Caco-2 (cell line): ENCODE measurements at regions of chr3 and their contacts with region 1.

Region 1: DNA sequence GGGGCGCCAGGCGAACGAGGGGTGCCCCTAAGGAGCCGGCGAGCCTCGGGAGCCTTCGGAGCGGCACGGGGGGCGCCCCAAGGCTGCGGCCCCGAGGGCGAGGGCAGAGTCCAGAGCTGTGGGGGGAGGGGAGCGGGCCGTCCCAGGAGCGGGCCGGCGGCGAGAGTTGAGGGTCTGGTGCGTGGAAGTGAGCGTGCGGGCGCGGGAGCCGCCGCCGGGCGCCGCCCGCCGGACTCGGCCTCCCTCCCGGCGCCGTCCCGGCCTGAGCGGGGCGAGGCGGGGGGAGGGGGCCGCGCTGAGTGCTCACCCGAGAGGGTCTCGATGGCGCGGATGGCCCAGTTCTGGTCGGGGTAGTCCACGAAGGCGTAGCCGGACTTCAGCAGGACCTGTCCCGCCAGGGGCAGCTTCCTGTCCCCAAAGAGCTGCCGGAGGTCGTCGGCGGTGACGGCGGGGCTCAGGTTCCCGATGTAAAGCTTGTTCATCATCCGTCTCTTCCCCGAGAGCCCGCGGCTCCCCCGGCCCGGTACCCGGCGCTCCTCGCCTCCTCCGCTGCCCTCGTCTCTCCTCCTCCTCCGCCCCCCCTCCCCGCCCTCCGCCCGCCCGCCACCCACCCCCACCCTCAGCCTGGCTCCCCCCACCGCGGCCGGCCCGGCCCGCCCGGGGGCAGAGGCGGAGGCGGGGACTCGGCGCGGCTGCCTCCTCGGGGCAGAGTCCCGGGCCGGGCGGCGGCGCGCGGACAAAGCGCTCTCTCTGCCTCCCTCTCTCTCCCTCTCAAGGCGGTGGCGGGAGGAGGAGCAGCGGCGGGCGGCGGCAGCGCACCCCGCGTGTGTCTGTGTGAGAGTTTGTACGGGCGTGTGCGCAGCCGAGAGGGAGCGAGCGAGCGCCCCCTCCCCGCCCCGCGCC is at the start of gene IGF2BP2:
- DNase-seq: peak; percentile 88 to 91
- H3K4me3 ChIP-seq: peak within 1 kb of the TSS; percentile 94
- H3K4me3 Mint-ChIP-seq: peak within 1 kb of the TSS; percentile 85
- H3K27ac Mint-ChIP-seq: peak within 1 kb of the TSS; percentile 98
- H3K4me1 ChIP-seq: peaks cover 23% of the 10 kb centered on the region
- H3K4me1 Mint-ChIP-seq: peaks cover 19% of the 10 kb centered on the region
- H3K27me3 ChIP-seq: no peaks in the 10 kb centered on the region
- H3K27me3 Mint-ChIP-seq: no peaks in the 10 kb centered on the region
- CTCF ChIP-seq: peak in 1 of 2 experiments; percentile 8
- total RNA-seq, gene IGF2BP2: 75.9 and 80.8 TPM in 2 replicates

Region 2: GRCh38 chr3:185789891-185790830 is 34.6 kb before region 1 on chr3:
- CTCF ChIA-PET with region 1: no interaction called
- POLR2A ChIA-PET with region 1: no interaction called
- intact Hi-C with region 1: loop called (anchors 5 kb)
- DNase-seq: no peak
- H3K4me3 ChIP-seq: no peak overlapping the region
- H3K4me3 Mint-ChIP-seq: no peak overlapping the region
- H3K27ac Mint-ChIP-seq: no peak overlapping the region
- H3K4me1 ChIP-seq: peaks cover 40% of the 10 kb centered on the region
- H3K4me1 Mint-ChIP-seq: peaks cover 46% of the 10 kb centered on the region
- H3K27me3 ChIP-seq: no peaks in the 10 kb centered on the region
- H3K27me3 Mint-ChIP-seq: no peaks in the 10 kb centered on the region
- CTCF ChIP-seq: no peak

Region 3: GRCh38 chr3:185924375-185924774 is 99.6 kb after region 1 on chr3:
- CTCF ChIA-PET with region 1: no interaction called
- POLR2A ChIA-PET with region 1: no interaction called
- intact Hi-C with region 1: no loop called
- DNase-seq: no peak
- H3K4me3 ChIP-seq: no peak overlapping the region
- H3K4me3 Mint-ChIP-seq: no peak overlapping the region
- H3K27ac Mint-ChIP-seq: no peak overlapping the region
- H3K4me1 ChIP-seq: peaks cover 28% of the 10 kb centered on the region
- H3K4me1 Mint-ChIP-seq: peaks cover 30% of the 10 kb centered on the region
- H3K27me3 ChIP-seq: no peaks in the 10 kb centered on the region
- H3K27me3 Mint-ChIP-seq: no peaks in the 10 kb centered on the region
- CTCF ChIP-seq: no peak

Region 4: DNA sequence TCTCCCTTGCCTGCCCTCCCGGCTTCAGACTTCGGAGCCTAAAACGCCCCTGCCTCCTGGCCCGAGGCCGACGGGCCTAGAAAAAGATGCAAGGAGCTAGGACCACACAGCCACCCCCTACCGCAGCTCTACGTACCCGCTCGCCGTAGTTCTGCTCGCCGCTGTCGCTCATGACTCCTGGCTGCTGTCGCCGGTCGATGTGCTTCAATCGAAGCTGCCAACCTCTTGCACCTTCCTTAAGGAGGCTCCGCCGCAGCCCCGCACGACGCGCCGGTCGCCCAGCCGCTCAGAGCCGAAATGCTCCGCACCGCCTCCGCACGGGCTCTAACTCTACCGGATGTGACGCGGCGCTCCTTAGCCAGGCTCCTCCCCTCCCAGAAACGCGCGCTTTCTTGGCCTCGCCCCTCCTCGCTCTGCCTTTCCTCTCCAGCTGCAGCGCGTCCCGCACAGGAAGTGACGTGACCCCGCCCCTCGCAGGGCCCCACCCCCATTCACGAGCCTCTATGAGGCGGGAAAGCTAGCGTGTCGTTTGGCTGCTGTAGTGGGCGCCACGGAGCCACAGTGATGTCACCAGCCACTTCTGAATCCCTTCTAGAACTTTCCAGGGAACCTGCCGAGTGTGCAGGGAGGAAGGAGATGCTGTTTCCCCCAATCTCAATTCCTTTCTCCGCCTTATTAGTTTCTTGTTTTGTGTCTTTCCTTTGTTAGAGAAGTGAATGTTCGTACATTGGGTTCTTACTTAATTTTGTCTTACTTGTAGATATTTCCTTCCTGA is 113.1 kb after region 1 on chr3 and contains the start of gene TRA2B:
- CTCF ChIA-PET with region 1: interaction called, 4 read pairs
- POLR2A ChIA-PET with region 1: interaction called, 7 read pairs
- intact Hi-C with region 1: loop called (anchors 10 kb)
- DNase-seq: peak; percentile 98 to 99
- H3K4me3 ChIP-seq: peak within 1 kb of the TSS; percentile 89
- H3K4me3 Mint-ChIP-seq: peak within 1 kb of the TSS; percentile 94
- H3K27ac Mint-ChIP-seq: peak within 1 kb of the TSS; percentile 99
- H3K4me1 ChIP-seq: peaks cover 31% of the 10 kb centered on the region
- H3K4me1 Mint-ChIP-seq: peaks cover 12% of the 10 kb centered on the region
- H3K27me3 ChIP-seq: no peaks in the 10 kb centered on the region
- H3K27me3 Mint-ChIP-seq: no peaks in the 10 kb centered on the region
- CTCF ChIP-seq: peak in 1 of 2 experiments; percentile 45
- total RNA-seq, gene TRA2B: 197 and 204 TPM in 2 replicates